ENCODE measurements at regions of chr17 and their contacts with region 1.

Region 1: GRCh38 chr17:41060052-41060604 is at the start of gene KRTAP2-3:
- DNase-seq: peak; percentile 86
- ATAC-seq: peak; percentile 48
- H3K4me3 ChIP-seq: no peak within 1 kb of the TSS
- H3K27ac ChIP-seq: peak within 1 kb of the TSS; percentile 94
- H3K4me1 ChIP-seq: peaks cover 67% of the 10 kb centered on the region
- H3K27me3 ChIP-seq: no peaks in the 10 kb centered on the region
- CTCF ChIP-seq: no peak
- total RNA-seq, gene KRTAP2-3: 10.8 and 12.4 TPM in 2 replicates

Region 2: GRCh38 chr17:40956401-40957254 is 103.5 kb before region 1 on chr17:
- CTCF ChIA-PET with region 1: no interaction called
- POLR2A ChIA-PET with region 1: no interaction called
- intact Hi-C with region 1: loop called (anchors 5 kb)
- DNase-seq: peak; percentile 96
- ATAC-seq: peak; percentile 89
- H3K4me3 ChIP-seq: peak overlapping the region; percentile 4; the same call in 1 of the 2 replicates
- H3K27ac ChIP-seq: peak overlapping the region; percentile 92
- H3K4me1 ChIP-seq: peaks cover 70% of the 10 kb centered on the region
- H3K27me3 ChIP-seq: no peaks in the 10 kb centered on the region
- CTCF ChIP-seq: no peak

Region 3: GRCh38 chr17:41008805-41009204 is 51.3 kb before region 1 on chr17 and contains the start of gene KRTAP3-1:
- CTCF ChIA-PET with region 1: no interaction called
- POLR2A ChIA-PET with region 1: no interaction called
- intact Hi-C with region 1: loop called (anchors 10 kb)
- DNase-seq: no peak
- ATAC-seq: no peak
- H3K4me3 ChIP-seq: no peak within 1 kb of the TSS
- H3K27ac ChIP-seq: peak within 1 kb of the TSS; percentile 28
- H3K4me1 ChIP-seq: peaks cover 40% of the 10 kb centered on the region
- H3K27me3 ChIP-seq: no peaks in the 10 kb centered on the region
- CTCF ChIP-seq: no peak
- total RNA-seq, gene KRTAP3-1: 1.6 TPM in 1 of 2 replicates, not detected in the other

Region 4: GRCh38 chr17:41211845-41212466 is 151.8 kb after region 1 on chr17:
- CTCF ChIA-PET with region 1: no interaction called
- POLR2A ChIA-PET with region 1: no interaction called
- intact Hi-C with region 1: loop called (anchors 10 kb)
- DNase-seq: peak; percentile 80
- ATAC-seq: peak; percentile 96
- H3K4me3 ChIP-seq: no peak overlapping the region
- H3K27ac ChIP-seq: peak overlapping the region; percentile 21; the same call in 1 of the 2 replicates
- H3K4me1 ChIP-seq: peaks cover 15% of the 10 kb centered on the region
- H3K27me3 ChIP-seq: no peaks in the 10 kb centered on the region
- CTCF ChIP-seq: no peak

Measured in PC-3 (cell line).